RWPE1 (cell line): ENCODE measurements at regions of chr4 and their contacts with region 1.

Region 1: GRCh38 chr4:164761241-164761640 is 7.3 kb downstream of the SMIM31 start:
- DNase-seq: no peak
- H3K27ac ChIP-seq: no peak overlapping the region
- CTCF ChIP-seq: no peak

Region 2: GRCh38 chr4:163295138-163295537 is 1466.1 kb before region 1 on chr4:
- CTCF ChIA-PET with region 1: no interaction called
- POLR2A ChIA-PET with region 1: no interaction called
- DNase-seq: no peak
- H3K27ac ChIP-seq: no peak overlapping the region
- CTCF ChIP-seq: no peak

Region 3: GRCh38 chr4:164779811-164780216 is 18.6 kb after region 1 on chr4:
- CTCF ChIA-PET with region 1: no interaction called
- POLR2A ChIA-PET with region 1: no interaction called
- DNase-seq: peak; percentile 31
- H3K27ac ChIP-seq: no peak overlapping the region
- CTCF ChIP-seq: peak; percentile 86

Region 4: DNA sequence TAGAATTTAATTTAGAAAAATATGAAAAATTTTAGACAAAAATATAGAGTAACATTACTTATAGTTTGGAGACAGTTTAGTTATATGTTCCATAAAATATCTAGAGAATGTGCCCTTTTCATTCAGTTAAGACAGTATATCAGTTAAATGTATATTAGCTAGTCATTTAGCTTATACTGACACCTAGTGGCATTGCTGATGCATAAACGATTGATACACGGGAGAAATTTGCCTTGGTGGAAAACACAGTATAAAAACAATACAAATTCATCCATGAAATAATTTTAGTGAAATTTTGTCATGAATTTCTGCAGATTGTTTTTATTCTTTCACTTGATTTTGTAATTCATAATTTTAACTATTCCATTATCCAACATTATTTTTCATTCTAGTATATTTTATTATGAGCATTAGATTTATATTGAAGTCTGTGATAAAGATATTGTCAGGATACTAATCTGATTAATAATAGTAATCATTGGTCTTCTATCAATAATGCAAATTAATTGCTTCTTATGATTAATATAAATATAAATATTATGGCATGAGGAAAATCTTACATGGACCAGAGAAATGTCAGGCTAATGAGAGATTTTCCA is 1330.8 kb after region 1 on chr4:
- CTCF ChIA-PET with region 1: interaction called, 11 read pairs
- POLR2A ChIA-PET with region 1: no interaction called
- DNase-seq: peak; percentile 27
- H3K27ac ChIP-seq: no peak overlapping the region
- CTCF ChIP-seq: peak; percentile 88